ENCODE measurements at regions of chr19 and their contacts with region 1.

Region 1: DNA sequence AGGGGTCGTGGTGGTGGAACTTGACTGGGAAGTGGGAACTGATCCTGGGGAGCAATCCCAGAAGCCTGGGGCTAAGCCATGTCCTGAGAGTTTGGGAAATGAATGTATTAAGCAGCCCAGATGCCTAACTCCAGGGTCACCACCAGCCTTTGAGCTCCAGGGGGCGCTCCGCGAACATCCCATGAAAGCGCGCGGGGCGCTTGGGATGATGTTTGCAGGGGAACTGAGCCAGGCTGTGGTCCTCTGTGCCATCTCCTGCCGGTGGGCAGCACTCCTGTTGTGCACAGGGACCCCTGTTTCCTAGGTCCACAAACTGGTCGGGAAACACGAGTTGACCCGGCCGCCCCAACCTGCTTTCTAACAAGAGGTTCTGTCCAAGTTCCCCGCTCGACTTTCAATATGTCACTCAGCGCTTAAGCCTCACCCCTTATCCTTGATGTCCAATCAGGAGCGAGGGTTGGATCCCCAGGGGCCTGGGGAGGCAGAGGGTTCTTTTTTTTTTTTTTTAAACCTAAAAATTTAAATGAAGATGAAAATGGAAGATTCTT is 14.4 kb downstream of the LEUTX start:
- DNase-seq: peak; percentile 65
- ATAC-seq: peak; percentile 99
- H3K4me3 ChIP-seq: peak overlapping the region; percentile 24 to 53
- H3K27ac ChIP-seq: no peak overlapping the region
- H3K4me1 ChIP-seq: peaks cover 0 to 6% of the 10 kb centered on the region in 2 experiments; a peak in 2 of 4 replicates
- H3K27me3 ChIP-seq: peaks cover 22% of the 10 kb centered on the region
- CTCF ChIP-seq: peak; percentile 83 to 92 (median 91)
- POLR2A ChIP-seq: no peak
- RAD21 ChIP-seq: peak; percentile 88

Region 2: GRCh38 chr19:39805104-39805503 is 12.0 kb after region 1 on chr19:
- CTCF ChIA-PET with region 1: interaction called, 14 read pairs
- POLR2A ChIA-PET with region 1: no interaction called
- RAD21 ChIA-PET with region 1: no interaction called
- intact Hi-C with region 1: no loop called
- DNase-seq: no peak
- ATAC-seq: no peak
- H3K4me3 ChIP-seq: no peak overlapping the region
- H3K27ac ChIP-seq: no peak overlapping the region
- H3K4me1 ChIP-seq: peaks cover 0 to 4% of the 10 kb centered on the region in 2 experiments; a peak in 1 of 4 replicates
- H3K27me3 ChIP-seq: peaks cover 5% of the 10 kb centered on the region; the same call in 1 of the 2 replicates
- CTCF ChIP-seq: no peak
- POLR2A ChIP-seq: no peak
- RAD21 ChIP-seq: no peak

Region 3: DNA sequence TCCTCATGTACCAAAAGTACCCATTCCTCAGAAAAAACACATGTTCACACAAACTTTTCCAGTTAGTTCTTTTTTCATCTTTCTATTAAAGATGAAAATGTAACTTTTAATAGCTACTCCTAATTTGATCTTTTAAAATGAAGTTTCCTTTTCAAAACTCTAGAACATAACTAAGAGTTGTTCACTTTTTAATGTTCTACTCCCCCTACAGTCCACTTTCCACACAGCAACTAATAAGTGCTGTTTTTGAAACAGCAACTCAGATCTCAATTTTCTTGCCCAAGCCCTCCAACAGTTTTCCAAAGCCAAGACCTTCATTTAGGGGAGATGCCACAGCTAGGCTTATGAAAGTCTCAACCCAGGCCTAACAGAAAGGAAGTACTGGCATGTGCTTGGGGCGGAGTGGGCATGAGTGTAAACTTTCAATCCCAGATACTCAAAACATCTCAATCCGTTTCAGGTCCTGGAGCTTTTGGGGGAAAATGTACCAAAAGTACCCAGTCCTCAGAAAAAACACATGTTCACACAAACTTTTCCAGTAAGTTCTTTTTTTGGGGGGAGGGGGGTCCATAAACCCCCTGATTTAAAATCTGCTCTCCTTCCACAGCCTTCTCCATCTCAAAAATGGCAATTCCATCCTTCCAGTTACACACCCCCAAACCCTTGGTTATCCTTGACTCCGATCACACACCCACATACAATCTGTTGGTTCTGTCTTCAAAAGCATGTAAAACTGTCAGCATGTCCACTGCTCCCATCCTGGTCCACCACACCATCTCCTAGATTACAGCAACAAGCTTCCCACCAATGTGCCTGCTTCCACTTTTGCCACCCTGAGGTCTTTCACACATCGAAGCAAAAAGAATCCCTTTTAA is 51.1 kb after region 1 on chr19:
- CTCF ChIA-PET with region 1: interaction called, 15 read pairs
- POLR2A ChIA-PET with region 1: no interaction called
- RAD21 ChIA-PET with region 1: no interaction called
- intact Hi-C with region 1: loop called (anchors 1 kb)
- DNase-seq: no peak
- ATAC-seq: no peak
- H3K4me3 ChIP-seq: peak overlapping the region; percentile 94 to 97
- H3K27ac ChIP-seq: 0 out of 2 replicates have a peak overlapping the region, but pooled peaks have one; percentile 73
- H3K4me1 ChIP-seq: peaks cover 28 to 39% of the 10 kb centered on the region in 2 experiments
- H3K27me3 ChIP-seq: no peaks in the 10 kb centered on the region
- CTCF ChIP-seq: peak; percentile 43 to 73 (median 62); a peak in 5 of 6 replicates
- POLR2A ChIP-seq: no peak
- RAD21 ChIP-seq: peak; percentile 48

Region 4: GRCh38 chr19:39970675-39971379 is 177.8 kb after region 1 on chr19 and contains the start of gene PSMC4:
- CTCF ChIA-PET with region 1: interaction called, 10 read pairs
- POLR2A ChIA-PET with region 1: interaction called, 4 read pairs
- RAD21 ChIA-PET with region 1: no interaction called
- intact Hi-C with region 1: loop called (anchors 2 kb)
- DNase-seq: peak; percentile 98
- ATAC-seq: peak; percentile 98
- H3K4me3 ChIP-seq: peak within 1 kb of the TSS; percentile 62 to 100
- H3K27ac ChIP-seq: peak within 1 kb of the TSS; percentile 82
- H3K4me1 ChIP-seq: peaks cover 6 to 18% of the 10 kb centered on the region in 2 experiments
- H3K27me3 ChIP-seq: no peaks in the 10 kb centered on the region
- CTCF ChIP-seq: peak; percentile 54 to 82 (median 62)
- POLR2A ChIP-seq: peak; percentile 77
- RAD21 ChIP-seq: peak; percentile 64
- total RNA-seq, gene PSMC4: 120 TPM

Region 5: GRCh38 chr19:40221858-40222837 is 429.1 kb after region 1 on chr19:
- CTCF ChIA-PET with region 1: no interaction called
- POLR2A ChIA-PET with region 1: no interaction called
- RAD21 ChIA-PET with region 1: no interaction called
- intact Hi-C with region 1: loop called (anchors 5 kb)
- DNase-seq: peak; percentile 95
- ATAC-seq: peak; percentile 39
- H3K4me3 ChIP-seq: peak overlapping the region; percentile 58 to 64
- H3K27ac ChIP-seq: peak overlapping the region; percentile 93
- H3K4me1 ChIP-seq: peaks cover 35 to 89% of the 10 kb centered on the region in 2 experiments; a peak in 3 of 4 replicates
- H3K27me3 ChIP-seq: no peaks in the 10 kb centered on the region
- CTCF ChIP-seq: peak; percentile 84 to 95 (median 90)
- POLR2A ChIP-seq: no peak
- RAD21 ChIP-seq: peak; percentile 96